HEK293 (cell line): ENCODE measurements at regions of chrX and their contacts with region 1.

Region 1: GRCh38 chrX:43750248-43750676 is 94.2 kb downstream of the MAOA start:
- H3K4me3 ChIP-seq: no peak overlapping the region
- H3K27ac ChIP-seq: no peak overlapping the region
- H3K4me1 ChIP-seq: no peaks in the 10 kb centered on the region
- CTCF ChIP-seq: peak; percentile 32; the same call in 1 of the 2 replicates

Region 2: DNA sequence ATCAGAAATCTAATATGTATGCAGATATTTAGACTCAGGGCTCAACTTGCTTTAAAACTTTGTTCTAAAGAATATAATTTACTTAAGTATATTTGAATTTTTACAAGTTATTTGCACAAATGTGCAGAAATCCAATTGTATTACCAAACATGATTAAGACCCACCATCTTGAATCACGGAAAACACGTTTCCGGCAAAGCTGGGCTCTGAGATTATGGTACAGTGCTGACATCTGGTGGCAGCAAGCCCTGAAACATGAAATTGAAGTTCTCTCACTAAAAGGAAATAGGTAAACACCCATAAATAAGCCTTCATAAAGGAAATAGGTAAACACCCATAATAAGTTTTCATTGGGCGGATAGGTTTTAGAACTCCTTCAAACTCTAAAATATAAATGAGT is 192.5 kb before region 1 on chrX:
- CTCF ChIA-PET with region 1: interaction called, 59 read pairs
- POLR2A ChIA-PET with region 1: no interaction called
- H3K4me3 ChIP-seq: no peak overlapping the region
- H3K27ac ChIP-seq: no peak overlapping the region
- H3K4me1 ChIP-seq: no peaks in the 10 kb centered on the region
- CTCF ChIP-seq: no peak

Region 3: GRCh38 chrX:43564953-43565352 is 185.3 kb before region 1 on chrX:
- CTCF ChIA-PET with region 1: interaction called, 59 read pairs
- POLR2A ChIA-PET with region 1: no interaction called
- H3K4me3 ChIP-seq: no peak overlapping the region
- H3K27ac ChIP-seq: no peak overlapping the region
- H3K4me1 ChIP-seq: no peaks in the 10 kb centered on the region
- CTCF ChIP-seq: no peak

Region 4: DNA sequence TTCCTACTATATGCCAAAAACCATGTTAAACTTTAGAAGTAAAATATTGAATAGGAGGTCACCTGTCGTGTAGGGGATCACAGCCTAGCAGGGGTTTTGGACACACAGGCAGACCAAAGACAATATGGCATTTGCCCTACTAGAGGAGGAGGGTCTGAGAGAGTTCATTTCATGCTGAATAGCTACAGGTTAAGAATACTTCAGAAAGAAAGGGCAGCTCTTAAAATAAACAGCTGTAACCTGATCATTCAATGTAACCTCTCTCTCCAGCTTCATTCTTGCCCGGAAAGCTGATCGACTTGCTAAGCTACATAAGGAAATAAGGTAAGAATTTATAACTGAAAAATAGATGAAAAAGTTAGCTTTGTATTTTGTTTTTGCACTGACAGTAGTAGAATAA is 14.3 kb before region 1 on chrX:
- CTCF ChIA-PET with region 1: interaction called, 15 read pairs
- POLR2A ChIA-PET with region 1: no interaction called
- H3K4me3 ChIP-seq: no peak overlapping the region
- H3K27ac ChIP-seq: no peak overlapping the region
- H3K4me1 ChIP-seq: no peaks in the 10 kb centered on the region
- CTCF ChIP-seq: no peak

Region 5: GRCh38 chrX:43878883-43879526 is 128.7 kb after region 1 on chrX:
- CTCF ChIA-PET with region 1: no interaction called
- POLR2A ChIA-PET with region 1: no interaction called
- H3K4me3 ChIP-seq: no peak overlapping the region
- H3K27ac ChIP-seq: no peak overlapping the region
- H3K4me1 ChIP-seq: no peaks in the 10 kb centered on the region
- CTCF ChIP-seq: no peak

Region 6: DNA sequence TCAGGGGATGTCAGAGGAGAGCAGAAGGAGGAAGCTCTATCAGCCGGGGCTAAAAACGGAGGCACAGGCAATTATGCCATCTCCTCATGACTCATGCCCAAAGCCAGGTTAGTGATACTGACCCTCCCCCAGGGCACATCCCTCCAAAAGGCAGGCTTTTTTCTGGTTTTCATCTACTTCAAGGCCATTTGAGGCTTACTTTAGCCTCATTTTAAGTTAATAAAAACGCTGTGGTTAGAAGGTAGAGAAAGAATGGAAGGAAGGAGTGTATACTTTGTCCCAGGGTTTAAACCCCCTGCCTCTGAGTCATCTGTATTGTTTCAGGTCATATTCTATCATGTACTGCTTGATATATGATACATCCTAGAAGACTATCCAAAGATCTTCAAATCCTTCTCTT is 312.6 kb after region 1 on chrX:
- CTCF ChIA-PET with region 1: no interaction called
- POLR2A ChIA-PET with region 1: no interaction called
- H3K4me3 ChIP-seq: no peak overlapping the region
- H3K27ac ChIP-seq: no peak overlapping the region
- H3K4me1 ChIP-seq: no peaks in the 10 kb centered on the region
- CTCF ChIP-seq: no peak

Region 7: GRCh38 chrX:44183329-44183728 is 433.1 kb after region 1 on chrX:
- CTCF ChIA-PET with region 1: no interaction called
- POLR2A ChIA-PET with region 1: no interaction called
- H3K4me3 ChIP-seq: no peak overlapping the region
- H3K27ac ChIP-seq: no peak overlapping the region
- H3K4me1 ChIP-seq: no peaks in the 10 kb centered on the region
- CTCF ChIP-seq: no peak